ENCODE measurements at regions of chr14 and their contacts with region 1.

Region 1: GRCh38 chr14:41489315-41489972 is 117.2 kb upstream of the LRFN5 start:
- DNase-seq: no peak
- H3K4me3 ChIP-seq: no peak overlapping the region
- H3K27ac ChIP-seq: no peak overlapping the region
- H3K4me1 ChIP-seq: no peaks in the 10 kb centered on the region
- H3K27me3 ChIP-seq: no peaks in the 10 kb centered on the region
- CTCF ChIP-seq: no peak
- POLR2A ChIP-seq: no peak

Region 2: GRCh38 chr14:41377932-41378331 is 111.5 kb before region 1 on chr14:
- intact Hi-C with region 1: no loop called
- DNase-seq: no peak
- H3K4me3 ChIP-seq: no peak overlapping the region
- H3K27ac ChIP-seq: no peak overlapping the region
- H3K4me1 ChIP-seq: no peaks in the 10 kb centered on the region
- H3K27me3 ChIP-seq: no peaks in the 10 kb centered on the region
- CTCF ChIP-seq: no peak
- POLR2A ChIP-seq: no peak

Region 3: DNA sequence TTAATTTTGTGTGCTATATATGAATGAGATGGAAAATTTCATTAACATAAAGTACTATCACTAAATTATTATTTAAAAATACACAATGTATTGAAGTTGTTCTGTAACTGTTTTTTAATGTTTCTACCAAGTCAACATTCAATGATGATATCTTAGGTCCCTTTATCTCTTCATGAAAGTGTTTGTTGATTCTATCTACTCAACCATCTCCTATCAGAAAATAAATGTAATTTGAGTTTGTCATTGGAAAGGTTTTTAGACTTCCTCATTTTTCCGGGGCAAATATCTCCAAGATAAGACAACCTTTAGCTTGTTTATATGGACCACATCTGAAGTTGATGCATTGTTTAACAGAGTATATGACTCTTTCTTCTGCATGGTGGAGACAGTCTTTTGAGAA is 35.4 kb before region 1 on chr14:
- intact Hi-C with region 1: loop called (anchors 2 kb)
- DNase-seq: no peak
- H3K4me3 ChIP-seq: no peak overlapping the region
- H3K27ac ChIP-seq: no peak overlapping the region
- H3K4me1 ChIP-seq: no peaks in the 10 kb centered on the region
- H3K27me3 ChIP-seq: no peaks in the 10 kb centered on the region
- CTCF ChIP-seq: no peak
- POLR2A ChIP-seq: no peak

Measured in vagina (tissue), 2 donors.